ENCODE measurements at regions of chr20 and their contacts with region 1.

Region 1: GRCh38 chr20:45880988-45881788 is at the start of gene ZSWIM1:
- H3K4me3 ChIP-seq: peak within 1 kb of the TSS; percentile 53
- H3K27ac ChIP-seq: peak within 1 kb of the TSS; percentile 62
- H3K4me1 ChIP-seq: no peaks in the 10 kb centered on the region
- CTCF ChIP-seq: no peak

Region 2: DNA sequence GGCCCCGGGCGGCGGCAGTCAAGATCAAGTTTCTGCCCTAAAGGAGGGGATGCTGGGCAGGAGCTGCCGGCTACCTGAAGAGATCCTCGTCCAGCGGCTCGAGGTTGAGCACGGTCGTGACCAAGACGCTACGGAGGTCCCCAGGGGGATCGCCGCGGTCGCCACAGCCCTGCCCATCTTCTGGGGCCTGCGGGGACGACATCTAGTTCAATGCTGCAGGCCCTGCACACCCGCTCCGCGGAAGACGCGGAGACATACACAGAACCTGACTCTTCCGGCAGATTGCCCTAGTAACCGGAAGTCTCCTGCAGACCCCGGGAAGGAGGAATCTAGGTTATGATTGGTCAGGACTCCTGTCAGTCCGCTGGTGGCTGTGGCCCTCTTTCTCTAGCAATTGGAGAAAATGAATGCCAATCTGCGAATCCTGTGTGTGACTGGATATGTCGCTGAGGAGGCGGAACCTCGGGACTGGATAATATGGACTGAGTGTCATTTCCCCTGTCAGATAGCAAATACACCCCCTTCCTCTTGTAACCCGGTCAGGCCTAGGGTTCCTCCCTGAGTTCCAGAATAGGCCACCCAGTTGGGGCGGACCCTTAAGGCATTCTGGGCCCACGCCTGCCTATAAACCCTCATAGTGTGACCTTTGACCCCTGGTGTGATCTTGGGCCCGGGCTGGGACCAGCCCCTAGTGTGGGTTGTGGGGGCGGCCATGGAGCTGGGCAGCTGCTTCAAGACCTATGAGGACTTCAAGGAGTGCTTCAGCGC is 23.9 kb before region 1 on chr20 and contains the starts of genes ACOT8 and ZSWIM3:
- CTCF ChIA-PET with region 1: interaction called, 3 read pairs
- POLR2A ChIA-PET with region 1: interaction called, 21 read pairs
- H3K4me3 ChIP-seq: peak within 1 kb of the TSS; percentile 60
- H3K27ac ChIP-seq: peak within 1 kb of the TSS; percentile 59; the same call in 1 of the 2 replicates
- H3K4me1 ChIP-seq: peaks cover 5% of the 10 kb centered on the region
- CTCF ChIP-seq: no peak

Region 3: GRCh38 chr20:45993197-45993951 is 112.2 kb after region 1 on chr20:
- CTCF ChIA-PET with region 1: no interaction called
- POLR2A ChIA-PET with region 1: no interaction called
- H3K4me3 ChIP-seq: no peak overlapping the region
- H3K27ac ChIP-seq: no peak overlapping the region
- H3K4me1 ChIP-seq: no peaks in the 10 kb centered on the region
- CTCF ChIP-seq: no peak

Measured in HEK293 (cell line).